GM12878 (cell line): ENCODE measurements at regions of chr4 and their contacts with region 1.

Region 1: GRCh38 chr4:111546881-111547280 is 598.4 kb upstream of the FAM241A start:
- DNase-seq: no peak
- ATAC-seq: no peak
- H3K4me3 ChIP-seq: no peak overlapping the region
- H3K27ac ChIP-seq: no peak overlapping the region
- H3K4me1 ChIP-seq: no peaks in the 10 kb centered on the region
- H3K27me3 ChIP-seq: no peaks in the 10 kb centered on the region
- CTCF ChIP-seq: no peak
- EP300 ChIP-seq: no peak
- POLR2A ChIP-seq: no peak
- RAD21 ChIP-seq: no peak

Region 2: GRCh38 chr4:111483375-111484169 is 63.3 kb before region 1 on chr4:
- CTCF ChIA-PET with region 1: no interaction called
- POLR2A ChIA-PET with region 1: no interaction called
- RAD21 ChIA-PET with region 1: no interaction called
- SMC1A ChIA-PET with region 1: no interaction called
- in situ Hi-C with region 1: loop called (anchors 10 kb)
- intact Hi-C with region 1: no loop called
- DNase-seq: no peak
- ATAC-seq: no peak
- H3K4me3 ChIP-seq: no peak overlapping the region
- H3K27ac ChIP-seq: no peak overlapping the region
- H3K4me1 ChIP-seq: no peaks in the 10 kb centered on the region
- H3K27me3 ChIP-seq: no peaks in the 10 kb centered on the region
- CTCF ChIP-seq: no peak
- EP300 ChIP-seq: no peak
- POLR2A ChIP-seq: no peak
- RAD21 ChIP-seq: no peak

Region 3: DNA sequence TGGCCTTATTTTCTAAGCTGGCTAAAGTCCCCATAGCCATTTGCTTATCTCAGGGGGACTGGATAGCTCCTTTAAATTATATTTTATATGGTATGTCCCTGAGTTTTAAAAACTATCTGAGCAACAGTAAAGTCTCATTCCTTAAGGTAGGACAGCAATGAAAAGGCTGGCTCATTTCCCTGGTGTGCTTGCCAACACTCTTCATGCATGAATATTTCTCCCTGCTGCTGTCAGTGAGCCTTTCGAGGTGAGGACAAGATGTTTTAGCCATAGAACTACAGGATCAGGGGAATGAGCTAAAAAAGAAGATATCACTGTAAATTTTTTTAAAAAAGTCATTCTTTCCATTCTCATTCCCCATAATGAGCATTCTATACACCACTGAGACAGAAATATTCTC is 171.0 kb after region 1 on chr4:
- CTCF ChIA-PET with region 1: no interaction called
- POLR2A ChIA-PET with region 1: no interaction called
- RAD21 ChIA-PET with region 1: no interaction called
- SMC1A ChIA-PET with region 1: no interaction called
- in situ Hi-C with region 1: no loop called
- intact Hi-C with region 1: no loop called
- DNase-seq: no peak
- ATAC-seq: no peak
- H3K4me3 ChIP-seq: no peak overlapping the region
- H3K27ac ChIP-seq: no peak overlapping the region
- H3K4me1 ChIP-seq: no peaks in the 10 kb centered on the region
- H3K27me3 ChIP-seq: no peaks in the 10 kb centered on the region
- CTCF ChIP-seq: no peak
- EP300 ChIP-seq: no peak
- POLR2A ChIP-seq: no peak
- RAD21 ChIP-seq: no peak